ENCODE measurements at regions of chr9 and their contacts with region 1.

Region 1: DNA sequence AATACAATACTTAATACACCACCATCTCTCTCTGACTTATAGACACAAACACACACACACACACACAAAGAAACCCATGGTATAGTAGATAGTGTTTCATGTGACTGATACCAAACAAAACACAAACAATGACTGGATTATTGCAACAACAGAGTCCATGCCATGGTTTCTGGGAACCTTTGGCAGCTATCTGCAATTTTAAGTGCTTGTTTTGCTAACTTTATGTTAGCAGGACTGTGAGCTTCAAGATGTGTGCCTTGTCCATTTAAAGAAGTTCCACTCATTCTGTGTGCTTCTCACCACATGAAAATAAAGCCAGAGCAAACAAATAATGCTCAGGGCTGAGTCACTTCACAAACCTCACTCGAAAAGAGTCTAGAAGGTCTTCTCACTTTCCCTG is 15.1 kb upstream of the LURAP1L start:
- DNase-seq: no peak
- ATAC-seq: no peak
- H3K4me3 ChIP-seq: no peak overlapping the region
- H3K4me3 Mint-ChIP-seq: no peak overlapping the region
- H3K27ac ChIP-seq: no peak overlapping the region
- H3K27ac Mint-ChIP-seq: no peak overlapping the region
- H3K4me1 ChIP-seq: no peaks in the 10 kb centered on the region
- H3K4me1 Mint-ChIP-seq: no peaks in the 10 kb centered on the region
- H3K27me3 ChIP-seq: no peaks in the 10 kb centered on the region
- H3K27me3 Mint-ChIP-seq: no peaks in the 10 kb centered on the region
- CTCF ChIP-seq: no peak

Region 2: GRCh38 chr9:12719431-12719830 is 40.3 kb before region 1 on chr9:
- CTCF ChIA-PET with region 1: no interaction called
- POLR2A ChIA-PET with region 1: no interaction called
- intact Hi-C with region 1: no loop called
- DNase-seq: no peak
- ATAC-seq: no peak
- H3K4me3 ChIP-seq: no peak overlapping the region
- H3K4me3 Mint-ChIP-seq: no peak overlapping the region
- H3K27ac ChIP-seq: no peak overlapping the region
- H3K27ac Mint-ChIP-seq: no peak overlapping the region
- H3K4me1 ChIP-seq: no peaks in the 10 kb centered on the region
- H3K4me1 Mint-ChIP-seq: no peaks in the 10 kb centered on the region
- H3K27me3 ChIP-seq: no peaks in the 10 kb centered on the region
- H3K27me3 Mint-ChIP-seq: no peaks in the 10 kb centered on the region
- CTCF ChIP-seq: no peak

Region 3: DNA sequence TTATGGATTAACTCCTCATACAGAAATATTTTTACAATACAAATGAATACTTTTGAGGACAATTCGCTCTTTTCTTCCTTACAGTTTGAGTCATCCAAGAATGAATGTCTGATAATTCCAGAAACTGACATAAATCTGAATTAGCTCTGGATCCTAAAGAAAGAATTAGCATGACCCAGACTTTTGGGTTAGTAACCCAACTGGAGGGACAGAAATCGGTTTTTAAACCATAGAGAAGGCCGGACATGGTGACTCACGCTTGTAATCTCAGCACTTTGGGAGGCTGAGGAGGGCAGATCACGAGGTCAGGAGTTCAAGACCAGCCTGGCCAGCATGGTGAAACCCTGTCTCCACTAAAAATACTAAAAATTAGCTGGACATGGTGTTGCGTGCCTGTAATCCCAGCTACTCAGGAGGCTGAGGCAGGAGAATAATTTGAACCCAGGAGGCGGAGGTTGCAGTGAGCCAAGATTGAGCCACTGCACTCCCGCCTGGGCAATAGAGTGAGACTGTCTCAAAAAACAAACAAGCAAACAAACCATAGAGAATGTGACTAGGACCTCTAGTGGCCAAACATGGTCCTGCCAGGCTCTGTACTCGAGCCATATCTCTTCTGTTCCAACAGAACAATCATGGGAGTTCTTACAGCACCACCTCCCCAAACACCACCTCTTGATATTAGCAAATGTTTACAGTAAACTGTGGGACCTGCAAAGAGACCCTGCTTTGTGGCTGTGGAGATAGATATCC is 59.9 kb after region 1 on chr9:
- CTCF ChIA-PET with region 1: no interaction called
- POLR2A ChIA-PET with region 1: no interaction called
- intact Hi-C with region 1: loop called in 1 of 2 experiments (anchors 10 kb)
- DNase-seq: no peak
- ATAC-seq: no peak
- H3K4me3 ChIP-seq: no peak overlapping the region
- H3K4me3 Mint-ChIP-seq: no peak overlapping the region
- H3K27ac ChIP-seq: no peak overlapping the region
- H3K27ac Mint-ChIP-seq: no peak overlapping the region
- H3K4me1 ChIP-seq: no peaks in the 10 kb centered on the region
- H3K4me1 Mint-ChIP-seq: no peaks in the 10 kb centered on the region
- H3K27me3 ChIP-seq: no peaks in the 10 kb centered on the region
- H3K27me3 Mint-ChIP-seq: no peaks in the 10 kb centered on the region
- CTCF ChIP-seq: no peak